Mucosa of descending colon (tissue), 3 donors: ENCODE measurements at regions of chr19 and their contacts with region 1.

Region 1: GRCh38 chr19:49097455-49098288 is 12.4 kb downstream of the SNRNP70 start:
- DNase-seq: peak in 2 of 3 donors; percentile 74 to 75
- ATAC-seq: peak; percentile 96
- H3K4me3 ChIP-seq: no peak overlapping the region
- H3K4me1 ChIP-seq: no peaks in the 10 kb centered on the region
- CTCF ChIP-seq: peak; percentile 97

Region 2: DNA sequence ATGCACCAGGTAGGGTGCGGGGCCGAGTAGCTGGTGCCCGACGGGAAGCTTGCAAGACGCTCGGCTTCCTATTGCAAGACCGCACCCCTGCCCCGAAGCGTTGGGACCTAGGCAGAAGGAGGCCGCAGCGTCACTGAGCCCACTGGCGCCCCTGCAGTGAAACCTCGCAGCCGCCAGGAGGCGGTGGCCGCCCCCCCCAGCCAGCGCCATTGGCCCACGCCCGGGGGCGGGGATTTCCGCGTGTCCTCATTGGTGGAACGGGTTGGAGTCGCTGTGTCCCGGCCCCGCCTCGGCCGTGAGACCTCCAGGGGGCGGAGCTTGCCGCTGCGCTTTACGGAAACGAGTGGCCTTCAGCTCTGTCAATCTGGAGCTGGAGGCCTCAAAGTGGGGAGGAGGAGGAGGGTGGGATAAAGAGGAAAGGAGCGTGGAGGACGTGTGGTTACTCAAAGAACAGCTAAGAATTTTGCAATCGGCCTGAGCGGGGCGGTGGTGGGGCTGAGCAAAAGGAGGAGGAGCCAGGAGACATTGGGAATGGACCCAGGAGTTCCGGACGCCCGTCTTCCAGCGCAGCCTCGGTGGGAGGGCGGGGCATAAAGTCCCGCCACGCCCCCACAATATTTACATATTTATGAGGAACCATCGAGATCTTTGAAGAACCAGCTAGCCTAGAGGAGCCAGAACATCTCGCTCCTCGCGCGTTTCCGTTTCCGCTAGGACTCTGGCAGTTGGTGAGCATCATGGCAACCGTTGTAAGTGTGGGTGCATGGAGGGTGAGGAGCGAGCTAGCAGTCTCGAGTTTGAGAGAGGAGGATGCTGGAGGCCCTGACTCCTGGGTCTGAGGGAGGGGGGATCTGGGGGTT is 104.3 kb before region 1 on chr19 and contains the starts of genes GYS1 and RUVBL2:
- intact Hi-C with region 1: no loop called
- DNase-seq: peak; percentile 99 to 100 (median 100)
- ATAC-seq: peak; percentile 94
- H3K4me3 ChIP-seq: peak within 1 kb of the TSS; percentile 57
- H3K4me1 ChIP-seq: peaks cover 23% of the 10 kb centered on the region
- CTCF ChIP-seq: peak; percentile 99
- total RNA-seq, gene GYS1: 40.1 to 49.3 (median 40.2) TPM
- total RNA-seq, gene RUVBL2: 47.4 to 68.8 (median 57.3) TPM

Region 3: GRCh38 chr19:49148784-49149651 is 51.3 kb after region 1 on chr19:
- intact Hi-C with region 1: loop called (anchors 10 kb)
- DNase-seq: peak; percentile 97 to 100 (median 100)
- ATAC-seq: peak; percentile 74
- H3K4me3 ChIP-seq: peak overlapping the region; percentile 38
- H3K4me1 ChIP-seq: peaks cover 27% of the 10 kb centered on the region
- CTCF ChIP-seq: no peak

Region 4: DNA sequence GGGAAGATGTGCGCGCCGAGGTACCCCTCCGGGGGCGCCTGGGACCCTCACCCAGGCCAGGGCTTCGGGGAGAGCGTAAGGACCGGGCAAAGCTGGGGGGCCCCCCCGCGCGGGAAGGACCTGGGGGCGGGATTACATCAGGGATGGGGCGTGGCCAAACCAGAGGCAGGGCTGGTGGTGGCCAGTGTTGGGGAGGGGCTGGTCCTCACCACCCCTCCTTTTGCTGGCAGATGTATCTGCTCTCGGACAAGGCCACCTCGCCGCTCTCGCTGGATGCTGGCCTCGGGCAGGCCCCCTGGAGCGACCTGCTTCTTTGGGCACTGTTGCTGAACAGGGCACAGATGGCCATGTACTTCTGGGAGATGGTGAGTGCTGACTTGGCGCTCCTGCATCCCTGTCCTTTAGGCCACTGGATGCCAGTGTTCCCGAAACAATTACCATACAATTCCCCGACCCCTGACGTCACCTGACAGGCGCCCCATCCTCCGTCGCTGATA is 85.2 kb after region 1 on chr19:
- intact Hi-C with region 1: loop called in 1 of 2 experiments (anchors 10 kb)
- DNase-seq: peak in 1 of 3 donors; percentile 39
- ATAC-seq: no peak
- H3K4me3 ChIP-seq: no peak overlapping the region
- H3K4me1 ChIP-seq: no peaks in the 10 kb centered on the region
- CTCF ChIP-seq: no peak

Region 5: DNA sequence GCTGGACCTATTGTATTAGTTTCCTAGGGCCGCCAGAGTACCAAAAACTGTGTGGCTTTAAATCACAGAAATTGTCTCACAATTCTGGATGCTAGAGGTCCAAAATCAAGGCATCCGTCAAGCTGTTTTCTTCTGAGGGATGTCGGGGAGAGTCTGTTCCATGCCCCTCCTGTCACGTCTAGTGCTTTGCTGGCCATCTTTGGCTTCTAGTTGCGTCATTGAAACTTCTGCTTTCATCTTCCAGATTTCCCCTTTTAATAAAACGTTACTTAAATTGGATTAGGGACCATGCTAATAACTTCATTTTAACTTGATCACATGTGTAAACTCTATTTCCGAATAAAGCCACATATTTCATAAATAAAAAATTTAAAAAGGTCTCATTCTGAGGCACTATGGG is 107.4 kb after region 1 on chr19:
- intact Hi-C with region 1: loop called in 1 of 2 experiments (anchors 5 kb)
- DNase-seq: no peak
- ATAC-seq: no peak
- H3K4me3 ChIP-seq: no peak overlapping the region
- H3K4me1 ChIP-seq: peaks cover 12% of the 10 kb centered on the region
- CTCF ChIP-seq: no peak